ENCODE measurements at regions of chr6 and their contacts with region 1.

Region 1: GRCh38 chr6:1609648-1610496 is at the start of gene FOXC1:
- DNase-seq: peak; percentile 86
- H3K4me3 ChIP-seq: peak within 1 kb of the TSS; percentile 29 to 62 (median 52)
- H3K27ac ChIP-seq: peak within 1 kb of the TSS; percentile 58 to 97 (median 68)
- H3K4me1 ChIP-seq: peaks cover 0 to 75% (median 51%) of the 10 kb centered on the region in 4 donors
- H3K27me3 ChIP-seq: peaks cover 89 to 92% (median 89%) of the 10 kb centered on the region in 3 donors
- CTCF ChIP-seq: no peak
- EP300 ChIP-seq: no peak
- POLR2A ChIP-seq: no peak
- total RNA-seq, gene FOXC1: 1.5 to 3.0 (median 1.8) TPM

Region 2: DNA sequence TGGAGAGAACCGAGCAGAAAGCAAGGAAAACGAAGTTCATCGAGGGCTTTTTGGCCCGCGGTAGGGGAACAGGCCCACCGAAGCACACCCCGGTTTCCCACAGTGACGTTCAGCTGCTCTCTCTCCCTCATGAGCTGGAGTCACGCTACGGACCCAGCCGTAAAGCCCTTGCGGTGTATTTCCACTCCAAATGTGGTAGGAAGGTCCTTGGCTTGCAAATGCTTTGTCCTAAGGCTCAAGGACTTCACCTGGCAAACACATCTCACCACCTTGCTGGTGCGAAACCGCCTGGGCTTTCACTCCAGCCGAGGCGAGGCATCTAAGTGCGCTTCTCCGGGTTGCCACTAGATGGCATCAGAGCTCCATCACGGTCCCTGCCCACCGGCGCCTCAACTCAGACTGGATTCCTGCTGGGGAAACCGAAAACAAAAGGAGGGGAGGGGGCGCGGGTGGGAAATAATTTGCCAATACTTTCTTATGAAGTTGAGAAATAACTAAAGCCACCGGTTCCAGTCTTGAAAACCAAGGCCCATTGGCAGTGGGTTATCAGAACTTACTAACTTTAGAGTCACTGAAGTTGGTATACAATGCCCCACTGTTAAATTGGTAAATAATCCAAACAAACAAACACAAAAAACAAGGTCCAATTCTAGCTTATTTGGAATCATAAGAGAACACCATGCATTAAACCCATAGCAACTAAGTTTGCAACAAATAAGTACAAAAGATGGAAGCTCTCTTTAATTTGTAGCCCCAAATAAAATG is 13.6 kb before region 1 on chr6:
- intact Hi-C with region 1: no loop called
- DNase-seq: peak; percentile 76
- H3K4me3 ChIP-seq: no peak overlapping the region
- H3K27ac ChIP-seq: no peak overlapping the region
- H3K4me1 ChIP-seq: peaks cover 0 to 7% (median 4%) of the 10 kb centered on the region in 4 donors
- H3K27me3 ChIP-seq: peaks cover 10 to 62% (median 46%) of the 10 kb centered on the region in 3 donors
- CTCF ChIP-seq: peak; percentile 80 to 96 (median 86)
- EP300 ChIP-seq: no peak
- POLR2A ChIP-seq: no peak

Region 3: DNA sequence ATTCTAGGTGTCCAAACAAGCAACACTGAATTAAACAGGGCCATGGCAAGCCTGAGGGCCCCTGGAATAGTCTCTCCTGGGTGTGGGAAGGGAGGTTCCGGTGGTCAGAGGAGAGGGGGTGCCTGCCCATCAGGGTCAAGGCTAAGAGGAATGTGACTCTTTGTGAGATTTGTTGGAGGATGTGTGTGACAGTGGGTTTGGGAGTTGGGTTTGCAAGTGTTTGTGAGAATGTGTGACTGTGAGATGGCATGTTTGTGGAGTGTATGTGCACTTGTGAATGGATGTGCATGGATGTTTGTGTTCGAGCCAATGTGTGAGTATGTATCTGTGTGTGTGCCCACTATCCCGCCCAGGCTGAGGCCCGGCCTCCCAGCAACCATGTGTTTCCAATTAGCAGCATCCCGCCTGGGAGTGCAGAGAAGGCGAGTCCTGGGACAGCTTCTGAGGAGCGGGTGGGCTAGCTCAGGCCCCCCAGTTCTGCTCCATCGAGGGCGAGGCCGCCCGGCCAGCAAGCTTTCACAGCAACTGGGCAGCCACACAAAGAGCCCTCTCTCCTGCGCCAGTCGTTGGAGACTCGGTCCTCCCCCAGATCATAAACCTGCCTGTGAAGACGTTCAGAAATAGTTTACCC is 12.5 kb after region 1 on chr6:
- intact Hi-C with region 1: loop called (anchors 2 kb)
- DNase-seq: peak; percentile 40
- H3K4me3 ChIP-seq: no peak overlapping the region
- H3K27ac ChIP-seq: no peak overlapping the region
- H3K4me1 ChIP-seq: peaks cover 0 to 32% (median 29%) of the 10 kb centered on the region in 4 donors
- H3K27me3 ChIP-seq: peaks cover 43 to 100% (median 100%) of the 10 kb centered on the region in 3 donors
- CTCF ChIP-seq: no peak
- EP300 ChIP-seq: no peak
- POLR2A ChIP-seq: no peak

Measured in sigmoid colon (tissue), 7 donors.